Activated CD4-positive, alpha-beta T cell treated with anti-CD3 and anti-CD28 coated beads for 36 hours (primary cell): ENCODE measurements at regions of chr20 and their contacts with region 1.

Region 1: DNA sequence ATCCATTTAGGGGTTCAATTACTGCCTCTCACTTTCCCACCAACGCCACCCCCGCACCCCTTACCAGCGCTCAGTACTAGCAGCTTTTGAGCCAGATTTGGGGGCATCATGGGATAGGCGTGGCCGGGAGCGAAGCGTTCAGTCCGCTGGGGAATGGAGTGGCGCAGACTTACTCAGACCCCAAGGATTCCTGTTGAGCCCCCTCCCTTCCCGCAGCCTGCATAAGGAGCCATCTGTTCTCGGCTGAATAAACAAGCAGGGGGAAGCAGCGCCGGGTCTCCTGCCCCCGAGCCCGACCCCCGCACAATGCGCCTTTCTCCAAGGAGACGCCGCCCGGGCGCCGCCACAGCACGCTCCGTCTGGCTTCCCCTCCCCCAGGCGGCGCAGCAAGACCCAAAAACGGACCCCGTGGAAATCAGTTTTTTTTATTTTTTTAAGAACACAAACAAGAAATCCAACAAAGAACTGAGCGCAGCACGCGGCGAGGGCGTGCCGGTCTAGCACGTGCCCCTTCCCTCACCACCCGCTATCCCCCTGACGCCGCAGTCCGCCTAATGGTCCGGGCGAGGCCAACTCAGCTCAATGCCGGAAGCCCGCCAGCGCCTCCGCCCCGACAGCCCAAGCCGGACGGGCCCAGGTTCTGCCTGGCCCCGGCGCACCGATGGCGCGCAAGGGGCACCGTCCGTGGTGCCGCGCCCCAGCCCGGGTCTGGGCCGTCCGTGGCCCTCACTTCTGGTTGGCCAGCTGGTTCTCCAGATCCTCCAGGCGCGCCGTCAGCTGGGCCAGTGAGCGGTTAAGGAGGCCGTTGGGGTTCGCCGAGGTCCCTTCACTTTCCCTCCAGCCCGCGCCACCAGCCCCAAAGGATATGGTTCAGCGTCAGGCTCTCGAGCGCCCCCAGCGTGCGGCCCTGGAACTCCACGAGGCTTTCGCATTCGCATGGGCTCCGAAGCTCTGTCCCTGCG is 13.3 kb upstream of the RBPJL start:
- DNase-seq: peak; percentile 92
- ATAC-seq: peak; percentile 93
- H3K4me3 Mint-ChIP-seq: peak overlapping the region; percentile 67
- H3K27ac Mint-ChIP-seq: peak overlapping the region; percentile 42
- H3K4me1 Mint-ChIP-seq: peaks cover 3% of the 10 kb centered on the region
- H3K27me3 Mint-ChIP-seq: peaks cover 33% of the 10 kb centered on the region

Region 2: DNA sequence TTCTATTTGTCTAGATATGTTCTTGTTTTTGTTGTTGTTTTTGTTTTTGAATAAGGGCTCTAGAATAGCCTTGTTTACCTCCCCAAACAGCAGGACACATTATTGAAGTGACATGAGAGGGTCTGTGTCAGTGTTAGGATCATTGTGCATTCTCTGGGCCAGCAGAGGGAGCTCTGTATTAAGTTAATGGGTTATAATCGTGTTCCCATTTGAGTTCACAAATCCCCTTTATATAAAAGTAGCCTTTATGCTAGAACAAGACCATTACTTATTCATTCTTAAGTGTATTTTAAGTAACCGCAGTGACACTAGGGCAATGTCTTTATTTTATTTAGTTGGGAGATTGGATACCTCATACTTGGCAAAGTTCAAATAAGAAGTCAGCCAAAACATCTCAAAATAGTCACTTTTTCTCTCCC is 282.2 kb before region 1 on chr20:
- CTCF ChIA-PET with region 1: interaction called, 6 read pairs
- POLR2A ChIA-PET with region 1: no interaction called
- intact Hi-C with region 1: loop called in 1 of 2 experiments (anchors 2 kb)
- DNase-seq: peak; percentile 70
- ATAC-seq: peak; percentile 72
- H3K4me3 Mint-ChIP-seq: no peak overlapping the region
- H3K27ac Mint-ChIP-seq: peak overlapping the region; percentile 10
- H3K4me1 Mint-ChIP-seq: peaks cover 59% of the 10 kb centered on the region
- H3K27me3 Mint-ChIP-seq: no peaks in the 10 kb centered on the region

Region 3: DNA sequence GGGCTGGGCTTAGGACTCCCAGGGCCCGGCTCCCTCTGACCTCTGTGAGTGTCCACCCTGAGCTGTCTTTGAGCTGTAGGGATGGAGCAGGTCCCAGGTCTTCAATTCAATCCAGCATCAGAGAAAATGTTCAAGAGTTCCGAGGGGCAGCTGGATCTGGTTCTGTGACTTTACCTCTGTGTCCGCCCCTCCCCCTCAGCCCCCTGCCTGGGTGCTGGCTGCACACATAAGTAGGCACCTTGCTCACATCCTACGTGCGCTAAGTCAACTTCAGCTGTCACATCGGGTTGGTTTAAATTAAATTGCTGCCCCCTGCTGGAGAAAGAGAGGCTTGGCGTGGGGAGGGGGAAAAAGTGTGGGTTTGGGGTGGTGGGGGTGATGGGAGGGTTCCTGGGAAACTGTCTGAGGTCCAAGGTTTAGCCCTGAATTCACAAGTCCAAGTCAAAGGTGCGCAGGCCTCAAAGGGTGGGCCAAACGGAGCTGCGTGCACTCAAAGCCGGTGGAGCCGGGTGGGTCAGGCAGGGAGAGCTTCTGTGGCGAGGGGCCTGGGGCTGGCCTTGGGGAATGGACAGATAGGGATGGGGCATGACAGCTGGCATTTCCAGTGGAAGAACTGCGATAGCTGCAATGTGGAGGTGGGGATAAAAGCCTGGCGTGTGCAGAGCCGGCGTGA is 181.4 kb before region 1 on chr20:
- CTCF ChIA-PET with region 1: interaction called, 28 read pairs
- POLR2A ChIA-PET with region 1: no interaction called
- intact Hi-C with region 1: no loop called
- DNase-seq: peak; percentile 59
- ATAC-seq: peak; percentile 59
- H3K4me3 Mint-ChIP-seq: no peak overlapping the region
- H3K27ac Mint-ChIP-seq: no peak overlapping the region
- H3K4me1 Mint-ChIP-seq: peaks cover 4% of the 10 kb centered on the region
- H3K27me3 Mint-ChIP-seq: peaks cover 1% of the 10 kb centered on the region

Region 4: GRCh38 chr20:45138561-45139300 is 154.6 kb before region 1 on chr20:
- CTCF ChIA-PET with region 1: interaction called, 23 read pairs
- POLR2A ChIA-PET with region 1: no interaction called
- intact Hi-C with region 1: loop called (anchors 1 to 2 kb)
- DNase-seq: peak; percentile 92
- ATAC-seq: peak; percentile 91
- H3K4me3 Mint-ChIP-seq: no peak overlapping the region
- H3K27ac Mint-ChIP-seq: no peak overlapping the region
- H3K4me1 Mint-ChIP-seq: no peaks in the 10 kb centered on the region
- H3K27me3 Mint-ChIP-seq: peaks cover 9% of the 10 kb centered on the region

Region 5: GRCh38 chr20:45268531-45268930 is 24.8 kb before region 1 on chr20:
- CTCF ChIA-PET with region 1: interaction called, 31 read pairs
- POLR2A ChIA-PET with region 1: no interaction called
- intact Hi-C with region 1: no loop called
- DNase-seq: no peak
- ATAC-seq: no peak
- H3K4me3 Mint-ChIP-seq: no peak overlapping the region
- H3K27ac Mint-ChIP-seq: no peak overlapping the region
- H3K4me1 Mint-ChIP-seq: no peaks in the 10 kb centered on the region
- H3K27me3 Mint-ChIP-seq: peaks cover 26% of the 10 kb centered on the region

Region 6: GRCh38 chr20:45322952-45323383 is 29.6 kb after region 1 on chr20:
- CTCF ChIA-PET with region 1: interaction called, 53 read pairs
- POLR2A ChIA-PET with region 1: no interaction called
- intact Hi-C with region 1: no loop called
- DNase-seq: no peak
- ATAC-seq: no peak
- H3K4me3 Mint-ChIP-seq: no peak overlapping the region
- H3K27ac Mint-ChIP-seq: no peak overlapping the region
- H3K4me1 Mint-ChIP-seq: peaks cover 24% of the 10 kb centered on the region
- H3K27me3 Mint-ChIP-seq: no peaks in the 10 kb centered on the region

Region 7: GRCh38 chr20:46562373-46563169 is 1269.2 kb after region 1 on chr20:
- CTCF ChIA-PET with region 1: no interaction called
- POLR2A ChIA-PET with region 1: no interaction called
- intact Hi-C with region 1: no loop called
- DNase-seq: peak; percentile 82
- ATAC-seq: peak; percentile 66
- H3K4me3 Mint-ChIP-seq: no peak overlapping the region
- H3K27ac Mint-ChIP-seq: no peak overlapping the region
- H3K4me1 Mint-ChIP-seq: peaks cover 18% of the 10 kb centered on the region
- H3K27me3 Mint-ChIP-seq: peaks cover 13% of the 10 kb centered on the region